Activated T-helper 2 cell treated with anti-CD3 and anti-CD28 coated beads, Interferon-gamma antibody, Interleukin-2, Interleukin-4, amounts not matched to agents 10 μg/mL and 5 μg/mL and 100 μg/mL, durations not matched to agents 14 hours and 24 hours and 36 hours (primary cell): ENCODE measurements at regions of chr7 and their contacts with region 1.

Region 1: DNA sequence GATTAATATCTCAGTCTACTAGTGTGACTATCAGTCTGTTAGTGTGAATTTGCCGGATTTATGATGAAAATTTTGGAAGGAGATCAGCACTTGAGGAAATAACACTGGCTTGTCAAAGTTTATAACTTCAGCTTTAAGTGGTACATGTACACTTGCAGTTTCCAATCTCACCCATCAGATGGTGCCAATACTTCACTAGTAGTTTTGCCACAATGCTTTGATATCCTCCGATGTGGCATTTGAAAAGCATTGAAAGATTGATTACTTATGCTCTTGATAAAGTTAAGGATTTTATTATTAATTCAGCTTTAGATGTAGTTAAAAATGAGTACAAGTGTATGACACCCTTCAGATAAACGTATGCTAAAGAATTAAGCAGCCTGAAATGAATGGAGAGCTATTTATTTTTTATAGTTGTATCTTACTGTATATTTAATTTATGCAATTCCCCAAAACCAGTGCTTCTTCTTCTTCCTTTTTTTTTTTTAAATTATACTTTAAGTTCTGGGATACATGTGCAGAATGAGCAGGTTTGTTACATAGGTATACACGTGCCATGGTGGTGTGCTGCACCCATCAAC is 98.2 kb downstream of the ANLN start:
- DNase-seq: no peak
- H3K4me3 Mint-ChIP-seq: no peak overlapping the region
- H3K27ac Mint-ChIP-seq: no peak overlapping the region
- H3K4me1 Mint-ChIP-seq: peaks cover 10% of the 10 kb centered on the region
- H3K27me3 Mint-ChIP-seq: peaks cover 2% of the 10 kb centered on the region

Region 2: DNA sequence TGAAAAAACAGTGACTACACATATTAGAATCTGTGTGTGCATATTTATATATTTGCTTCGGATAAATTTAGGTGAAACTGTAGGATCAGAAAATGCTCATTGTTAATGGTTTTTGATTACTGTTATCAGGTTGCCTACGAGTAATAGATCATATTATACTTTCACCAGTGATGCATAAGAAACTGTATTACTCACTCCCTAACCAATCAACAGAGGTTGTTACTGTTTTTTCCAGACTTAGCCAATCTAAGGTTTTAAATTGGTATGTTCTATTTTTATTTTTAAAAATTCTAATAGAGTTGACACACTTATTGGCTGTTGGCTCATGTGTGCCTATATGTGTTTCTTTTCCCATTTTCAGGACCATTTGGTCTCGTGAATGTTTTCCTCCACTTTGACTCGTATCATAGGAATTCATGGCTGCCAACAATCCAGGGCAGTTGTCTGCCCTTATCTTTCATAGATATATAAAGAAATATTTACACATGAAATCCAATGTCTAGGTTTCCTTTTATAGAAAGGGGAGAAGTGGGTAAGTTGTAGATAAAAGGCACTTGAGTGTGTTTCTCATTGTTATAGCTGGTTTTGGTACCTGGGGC is 39.0 kb before region 1 on chr7:
- intact Hi-C with region 1: no loop called
- DNase-seq: no peak
- H3K4me3 Mint-ChIP-seq: no peak overlapping the region
- H3K27ac Mint-ChIP-seq: no peak overlapping the region
- H3K4me1 Mint-ChIP-seq: no peaks in the 10 kb centered on the region
- H3K27me3 Mint-ChIP-seq: no peaks in the 10 kb centered on the region

Region 3: GRCh38 chr7:36670585-36671431 is 183.0 kb after region 1 on chr7:
- intact Hi-C with region 1: loop called (anchors 1 kb)
- DNase-seq: peak; percentile 57
- H3K4me3 Mint-ChIP-seq: peak overlapping the region; percentile 57
- H3K27ac Mint-ChIP-seq: peak overlapping the region; percentile 86
- H3K4me1 Mint-ChIP-seq: peaks cover 58% of the 10 kb centered on the region
- H3K27me3 Mint-ChIP-seq: no peaks in the 10 kb centered on the region

Region 4: GRCh38 chr7:36949711-36950600 is 462.1 kb after region 1 on chr7:
- intact Hi-C with region 1: no loop called
- DNase-seq: no peak
- H3K4me3 Mint-ChIP-seq: no peak overlapping the region
- H3K27ac Mint-ChIP-seq: no peak overlapping the region
- H3K4me1 Mint-ChIP-seq: no peaks in the 10 kb centered on the region
- H3K27me3 Mint-ChIP-seq: no peaks in the 10 kb centered on the region

Region 5: GRCh38 chr7:36967387-36967786 is 479.5 kb after region 1 on chr7:
- intact Hi-C with region 1: loop called (anchors 10 kb)
- DNase-seq: no peak
- H3K4me3 Mint-ChIP-seq: no peak overlapping the region
- H3K27ac Mint-ChIP-seq: no peak overlapping the region
- H3K4me1 Mint-ChIP-seq: peaks cover 39% of the 10 kb centered on the region
- H3K27me3 Mint-ChIP-seq: no peaks in the 10 kb centered on the region

Region 6: DNA sequence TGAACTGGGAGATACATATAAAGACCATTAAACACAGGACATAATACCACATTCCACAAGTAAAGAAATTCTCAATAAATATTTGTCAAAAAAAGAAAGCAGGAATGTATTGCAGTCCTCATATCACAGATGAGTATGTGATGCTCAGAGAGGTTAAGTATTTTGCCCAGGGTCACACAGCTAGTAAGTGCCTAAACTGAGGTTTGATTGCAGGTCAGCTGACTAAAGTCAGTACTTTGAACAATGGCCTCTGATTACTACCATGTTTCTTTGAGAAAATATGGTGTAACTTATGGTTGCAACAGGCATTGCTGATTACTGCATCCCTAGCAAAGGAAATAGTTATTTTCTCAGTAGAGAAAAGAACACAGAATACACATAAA is 693.7 kb after region 1 on chr7:
- intact Hi-C with region 1: loop called (anchors 1 kb)
- DNase-seq: no peak
- H3K4me3 Mint-ChIP-seq: no peak overlapping the region
- H3K27ac Mint-ChIP-seq: no peak overlapping the region
- H3K4me1 Mint-ChIP-seq: peaks cover 16% of the 10 kb centered on the region
- H3K27me3 Mint-ChIP-seq: no peaks in the 10 kb centered on the region

Region 7: GRCh38 chr7:37198906-37199485 is 711.1 kb after region 1 on chr7:
- intact Hi-C with region 1: loop called (anchors 1 kb)
- DNase-seq: peak; percentile 52
- H3K4me3 Mint-ChIP-seq: no peak overlapping the region
- H3K27ac Mint-ChIP-seq: no peak overlapping the region
- H3K4me1 Mint-ChIP-seq: peaks cover 6% of the 10 kb centered on the region
- H3K27me3 Mint-ChIP-seq: no peaks in the 10 kb centered on the region